MCF 10A (cell line): ENCODE measurements at regions of chr12 and their contacts with region 1.

Region 1: GRCh38 chr12:96047229-96048211 is 12.1 kb upstream of the LTA4H start:
- DNase-seq: peak; percentile 94
- H3K4me3 Mint-ChIP-seq: peak overlapping the region; percentile 59
- H3K27ac Mint-ChIP-seq: peak overlapping the region; percentile 83
- H3K4me1 Mint-ChIP-seq: peaks cover 36% of the 10 kb centered on the region
- H3K27me3 Mint-ChIP-seq: no peaks in the 10 kb centered on the region
- CTCF ChIP-seq: no peak

Region 2: DNA sequence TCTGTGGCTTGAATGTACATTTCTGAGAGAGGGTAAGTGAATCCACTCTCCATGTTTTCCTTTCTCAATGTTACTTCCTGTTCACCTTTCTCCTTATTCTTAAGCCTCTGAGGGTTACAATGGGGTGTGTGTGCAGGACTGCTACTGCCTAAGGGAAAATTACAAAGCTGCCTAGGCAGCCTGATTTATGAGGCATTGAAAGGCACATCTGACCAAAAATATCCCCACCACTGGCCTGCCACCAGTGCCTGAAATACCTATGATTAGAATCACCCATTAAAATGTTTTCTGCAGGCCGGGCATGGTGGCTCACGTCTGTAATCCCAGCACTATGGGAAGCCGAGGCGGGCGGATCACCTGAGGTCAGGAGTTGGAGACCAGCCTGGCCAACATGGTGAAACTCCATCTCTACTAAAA is 398.1 kb before region 1 on chr12:
- CTCF ChIA-PET with region 1: no interaction called
- POLR2A ChIA-PET with region 1: no interaction called
- intact Hi-C with region 1: no loop called
- DNase-seq: peak; percentile 90
- H3K4me3 Mint-ChIP-seq: no peak overlapping the region
- H3K27ac Mint-ChIP-seq: peak overlapping the region; percentile 79
- H3K4me1 Mint-ChIP-seq: peaks cover 34% of the 10 kb centered on the region
- H3K27me3 Mint-ChIP-seq: no peaks in the 10 kb centered on the region
- CTCF ChIP-seq: no peak

Region 3: DNA sequence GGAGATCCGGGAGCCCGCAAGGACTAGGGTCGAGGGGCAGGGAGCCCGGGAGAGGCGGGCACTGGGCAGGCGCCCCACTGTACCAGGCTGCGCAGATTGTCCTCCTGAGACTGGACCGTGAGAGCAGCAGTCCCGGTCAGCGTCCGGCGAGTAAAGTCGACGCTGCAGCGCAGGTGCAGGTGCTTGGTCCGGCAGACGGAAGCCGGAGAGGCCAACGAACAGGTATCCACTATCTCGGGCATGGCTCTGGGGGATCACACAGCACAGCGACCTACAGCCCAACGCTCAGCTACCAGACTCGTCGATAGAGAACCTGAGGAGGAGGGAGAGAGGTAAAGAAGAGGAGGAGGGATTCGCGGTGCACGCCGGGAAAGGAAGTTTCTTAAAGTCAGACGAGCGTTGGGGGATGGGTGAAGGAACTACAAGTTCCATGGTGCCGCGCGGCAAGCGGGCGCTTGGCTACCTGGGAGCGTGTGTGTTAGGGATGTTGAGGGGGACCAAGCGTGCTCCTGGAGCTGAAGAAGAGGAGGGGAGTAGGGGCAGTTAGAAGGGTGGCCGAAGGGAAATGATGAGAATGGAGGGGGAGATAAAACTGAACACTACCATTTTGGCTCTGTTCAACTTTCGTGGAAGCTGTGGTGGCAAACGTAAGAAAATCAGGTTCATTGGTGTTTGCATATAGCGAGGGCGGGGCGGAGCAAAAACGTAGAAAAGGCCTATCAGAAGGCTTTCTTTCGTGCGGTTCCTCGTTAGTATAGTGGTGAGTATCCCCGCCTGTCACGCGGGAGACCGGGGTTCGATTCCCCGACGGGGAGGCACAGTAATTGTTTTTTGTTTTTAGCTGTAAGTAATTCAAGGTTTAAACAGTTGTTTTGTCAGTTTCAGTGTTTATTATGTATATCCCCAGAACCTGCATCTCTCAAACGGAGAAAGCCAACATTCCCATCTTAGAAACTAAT is 12.0 kb before region 1 on chr12 and contains the start of gene LTA4H:
- CTCF ChIA-PET with region 1: no interaction called
- POLR2A ChIA-PET with region 1: interaction called, 22 read pairs
- intact Hi-C with region 1: no loop called
- DNase-seq: peak; percentile 99
- H3K4me3 Mint-ChIP-seq: no peak within 1 kb of the TSS
- H3K27ac Mint-ChIP-seq: no peak within 1 kb of the TSS
- H3K4me1 Mint-ChIP-seq: peaks cover 8% of the 10 kb centered on the region
- H3K27me3 Mint-ChIP-seq: no peaks in the 10 kb centered on the region
- CTCF ChIP-seq: no peak
- total RNA-seq, gene LTA4H: 52.3 and 66.0 TPM in 2 replicates

Region 4: GRCh38 chr12:96274331-96274730 is 226.8 kb after region 1 on chr12:
- CTCF ChIA-PET with region 1: no interaction called
- POLR2A ChIA-PET with region 1: no interaction called
- intact Hi-C with region 1: no loop called
- DNase-seq: no peak
- H3K4me3 Mint-ChIP-seq: no peak overlapping the region
- H3K27ac Mint-ChIP-seq: peak overlapping the region; percentile 40
- H3K4me1 Mint-ChIP-seq: peaks cover 19% of the 10 kb centered on the region
- H3K27me3 Mint-ChIP-seq: no peaks in the 10 kb centered on the region
- CTCF ChIP-seq: no peak